Gastrocnemius medialis (tissue), 4 donors: ENCODE measurements at regions of chr4 and their contacts with region 1.

Region 1: GRCh38 chr4:137861682-137862081 is 329.4 kb upstream of the PCDH18 start:
- DNase-seq: no peak
- ATAC-seq: no peak
- H3K4me3 ChIP-seq: no peak overlapping the region
- H3K27ac ChIP-seq: no peak overlapping the region
- H3K4me1 ChIP-seq: no peaks in the 10 kb centered on the region
- H3K27me3 ChIP-seq: no peaks in the 10 kb centered on the region
- CTCF ChIP-seq: peak in 2 of 5 experiments; percentile 22 to 36
- POLR2A ChIP-seq: no peak

Region 2: DNA sequence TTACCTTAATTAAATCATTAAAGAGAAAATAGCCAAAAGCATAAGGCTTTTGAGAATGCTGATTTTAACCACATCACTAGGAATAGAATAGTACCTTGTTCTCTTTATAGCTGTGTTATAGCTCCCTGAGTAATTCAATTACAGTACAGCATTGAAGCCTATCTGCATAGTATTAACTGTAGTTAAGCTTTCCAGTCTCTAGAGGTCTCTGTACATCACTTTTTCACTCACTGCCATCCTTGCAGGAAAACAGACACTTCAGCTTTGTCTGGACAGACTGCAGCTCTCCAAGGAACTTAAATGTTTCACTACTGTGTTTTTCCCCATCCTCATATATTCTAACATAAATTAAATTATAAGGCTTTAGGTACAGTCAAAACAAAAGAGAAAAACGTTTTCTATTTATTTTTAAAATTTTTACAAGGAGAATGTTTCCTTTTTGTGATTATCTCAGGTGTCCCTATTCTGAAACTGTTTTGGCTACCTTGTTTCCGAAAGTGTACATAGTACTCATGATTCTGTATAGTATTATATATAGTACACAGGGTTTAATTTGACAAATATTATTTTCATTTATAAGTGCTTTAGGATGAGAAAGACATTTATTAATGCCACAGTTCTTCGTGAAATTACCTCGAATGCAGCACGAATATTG is 737.3 kb before region 1 on chr4:
- in situ Hi-C with region 1: loop called (anchors 10 to 25 kb)
- intact Hi-C with region 1: no loop called
- DNase-seq: no peak
- ATAC-seq: peak; percentile 89 to 96
- H3K4me3 ChIP-seq: peak overlapping the region; percentile 34 to 49 (median 36)
- H3K27ac ChIP-seq: no peak overlapping the region
- H3K4me1 ChIP-seq: no peaks in the 10 kb centered on the region
- H3K27me3 ChIP-seq: no peaks in the 10 kb centered on the region
- CTCF ChIP-seq: peak in 4 of 5 experiments; percentile 19 to 54 (median 40)
- POLR2A ChIP-seq: no peak

Region 3: DNA sequence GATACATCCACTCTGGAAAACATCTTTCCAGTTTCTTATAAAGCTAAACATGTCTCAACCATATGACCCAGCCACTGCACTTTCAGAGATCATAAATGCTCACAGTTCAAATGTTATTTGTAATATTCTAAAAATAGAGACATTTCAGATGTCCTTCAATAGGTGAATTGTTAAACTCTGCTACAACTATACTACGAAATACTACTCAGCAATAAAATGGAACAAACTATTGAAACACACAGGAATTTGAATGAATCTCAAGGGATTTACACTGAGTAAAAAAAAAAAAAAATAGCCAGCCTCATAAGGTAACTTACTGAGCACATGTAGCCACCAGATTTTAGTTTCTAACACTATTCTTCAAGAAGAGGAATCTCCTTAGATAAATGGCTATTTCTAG is 583.3 kb before region 1 on chr4:
- in situ Hi-C with region 1: no loop called
- intact Hi-C with region 1: loop called (anchors 5 kb)
- DNase-seq: no peak
- ATAC-seq: no peak
- H3K4me3 ChIP-seq: no peak overlapping the region
- H3K27ac ChIP-seq: no peak overlapping the region
- H3K4me1 ChIP-seq: no peaks in the 10 kb centered on the region
- H3K27me3 ChIP-seq: no peaks in the 10 kb centered on the region
- CTCF ChIP-seq: no peak
- POLR2A ChIP-seq: no peak

Region 4: DNA sequence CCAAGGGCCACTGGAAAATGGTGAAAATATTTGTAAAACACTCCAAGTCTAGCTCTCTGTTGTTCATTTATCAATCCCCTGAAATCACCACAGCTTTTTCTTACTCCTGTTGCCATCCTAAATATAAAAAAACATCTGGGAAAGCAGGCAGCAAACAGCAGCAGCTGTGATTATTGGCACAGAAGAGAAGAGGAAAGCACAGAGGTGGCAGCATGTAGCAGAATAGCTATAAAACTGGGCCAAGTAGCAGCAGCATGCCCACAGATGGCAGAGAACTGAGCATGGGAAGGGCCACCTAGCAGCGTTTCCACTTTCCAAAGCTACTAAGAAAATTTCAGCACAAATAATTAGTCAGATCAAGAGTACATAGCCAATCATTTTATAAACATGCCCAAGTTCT is 73.2 kb after region 1 on chr4:
- in situ Hi-C with region 1: no loop called
- intact Hi-C with region 1: no loop called
- DNase-seq: no peak
- ATAC-seq: no peak
- H3K4me3 ChIP-seq: no peak overlapping the region
- H3K27ac ChIP-seq: no peak overlapping the region
- H3K4me1 ChIP-seq: no peaks in the 10 kb centered on the region
- H3K27me3 ChIP-seq: no peaks in the 10 kb centered on the region
- CTCF ChIP-seq: no peak
- POLR2A ChIP-seq: no peak